AG04449 (cell line): ENCODE measurements at regions of chr20 and their contacts with region 1.

Region 1: GRCh38 chr20:35303735-35304491 is 11.7 kb upstream of the FAM83C start:
- DNase-seq: no peak
- H3K4me3 ChIP-seq: no peak overlapping the region
- CTCF ChIP-seq: peak; percentile 94

Region 2: DNA sequence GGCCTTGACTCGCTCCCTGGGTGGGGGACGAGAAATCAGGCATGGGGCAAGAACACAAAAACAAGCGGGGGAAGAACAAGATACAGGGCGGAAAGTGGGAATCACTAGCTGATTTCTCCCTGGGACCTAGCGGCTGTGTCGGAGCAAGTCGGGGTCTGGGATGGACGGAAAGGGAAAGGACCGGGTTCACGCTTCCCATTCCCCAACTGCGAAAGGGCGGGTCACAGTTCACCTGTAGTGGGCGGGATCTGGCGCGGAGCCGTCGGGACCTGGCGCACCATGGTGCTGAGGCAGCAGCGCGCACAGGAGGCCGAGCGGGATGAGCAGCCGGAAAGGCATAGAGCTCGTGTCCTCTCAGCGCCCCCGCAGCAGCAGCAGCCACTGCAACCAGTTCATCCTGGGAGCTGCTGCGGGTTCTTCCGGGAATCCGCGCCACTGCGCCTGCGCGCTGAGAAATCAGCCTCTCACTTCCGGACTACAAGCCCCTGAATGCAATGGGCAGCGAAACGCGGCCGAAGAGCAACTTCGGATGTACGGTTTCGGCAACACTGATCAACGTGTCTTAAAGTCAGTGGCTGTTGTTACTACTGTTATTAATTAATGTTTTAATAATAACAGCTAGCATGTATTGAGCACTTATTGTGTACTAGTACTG is 156.9 kb before region 1 on chr20 and contains the start of gene EDEM2:
- CTCF ChIA-PET with region 1: interaction called, 73 read pairs
- POLR2A ChIA-PET with region 1: no interaction called
- DNase-seq: peak; percentile 75
- H3K4me3 ChIP-seq: peak within 1 kb of the TSS; percentile 95
- CTCF ChIP-seq: peak; percentile 8

Region 3: DNA sequence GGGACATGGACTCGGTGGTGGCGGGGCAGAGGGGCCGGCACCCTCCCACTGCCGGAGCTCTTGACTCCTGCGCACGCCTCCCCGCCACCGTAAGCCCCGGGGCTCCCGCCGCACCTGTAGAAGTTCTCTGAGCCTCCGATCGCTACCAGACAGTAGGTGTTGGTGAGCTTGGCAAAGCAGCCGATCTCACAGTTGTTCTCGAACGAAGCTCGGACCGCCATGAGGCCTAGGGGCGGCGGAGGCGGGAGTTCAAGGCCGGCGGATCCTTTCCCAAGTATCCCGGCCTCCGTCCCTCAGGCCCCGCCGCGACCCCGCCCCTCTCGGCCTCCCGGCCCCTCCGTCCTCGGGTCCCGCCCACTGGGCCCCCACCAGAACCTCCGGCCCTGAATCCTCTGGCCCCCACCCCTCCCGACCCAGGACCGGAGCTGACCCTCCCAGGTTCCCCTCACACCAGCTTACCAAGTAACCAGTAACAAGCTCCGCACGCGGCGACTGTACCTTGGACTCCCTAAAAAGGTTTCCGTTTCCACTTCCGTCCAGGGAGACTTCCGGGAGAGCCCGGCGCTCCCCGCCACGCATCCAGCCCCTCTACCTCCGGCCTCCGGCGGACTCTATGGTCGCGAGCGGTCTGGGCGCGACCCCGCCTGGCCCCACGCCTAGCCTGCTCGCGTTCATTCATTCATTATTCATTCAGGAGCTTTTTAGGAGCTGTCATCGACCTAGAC is 19.5 kb before region 1 on chr20 and contains the start of gene EIF6:
- CTCF ChIA-PET with region 1: interaction called, 113 read pairs
- POLR2A ChIA-PET with region 1: interaction called, 6 read pairs
- DNase-seq: no peak
- H3K4me3 ChIP-seq: peak within 1 kb of the TSS; percentile 92
- CTCF ChIP-seq: no peak

Region 4: DNA sequence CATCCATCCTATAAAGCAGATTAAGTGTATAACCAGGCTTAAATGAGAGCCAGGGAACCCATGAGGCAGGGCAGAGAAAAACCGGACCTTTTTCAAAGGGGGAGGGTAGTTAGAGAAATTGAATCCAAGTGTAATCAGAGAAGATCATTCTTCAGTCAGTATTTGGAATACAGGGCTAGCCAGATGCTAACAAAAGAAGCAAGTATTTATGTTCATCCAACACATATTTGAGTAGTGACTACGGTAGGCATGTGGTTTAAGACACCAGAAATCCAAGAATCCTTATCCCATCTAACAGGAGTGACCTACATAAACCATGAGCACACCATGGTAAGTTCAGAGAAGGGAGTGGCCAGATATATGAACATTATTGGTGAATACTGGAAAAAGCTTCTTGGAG is 35.1 kb after region 1 on chr20:
- CTCF ChIA-PET with region 1: interaction called, 35 read pairs
- POLR2A ChIA-PET with region 1: interaction called, 6 read pairs
- DNase-seq: peak; percentile 93
- H3K4me3 ChIP-seq: no peak overlapping the region
- CTCF ChIP-seq: no peak

Region 5: DNA sequence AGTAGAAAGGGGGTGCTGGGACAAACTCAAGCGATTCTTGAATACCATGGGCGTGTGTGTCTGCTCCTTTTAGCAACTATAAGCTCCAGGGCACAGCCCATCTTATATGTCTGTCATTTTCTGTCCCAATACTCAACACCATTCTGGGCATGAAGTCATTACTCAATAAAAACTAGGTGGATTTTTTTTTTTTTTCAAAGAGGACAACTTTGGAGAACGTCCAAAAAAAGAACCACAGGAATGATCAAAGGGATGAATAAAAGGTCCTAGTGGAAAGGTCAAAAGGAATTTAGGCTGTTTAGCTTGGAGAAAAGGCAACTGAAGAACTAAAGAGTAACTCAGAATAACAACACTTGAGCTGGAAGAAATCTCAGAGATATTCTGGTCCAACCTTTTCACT is 83.4 kb after region 1 on chr20:
- CTCF ChIA-PET with region 1: interaction called, 14 read pairs
- POLR2A ChIA-PET with region 1: no interaction called
- DNase-seq: no peak
- H3K4me3 ChIP-seq: no peak overlapping the region
- CTCF ChIP-seq: no peak

Region 6: GRCh38 chr20:35432430-35432735 is 128.5 kb after region 1 on chr20:
- CTCF ChIA-PET with region 1: interaction called, 662 read pairs
- POLR2A ChIA-PET with region 1: interaction called, 5 read pairs
- DNase-seq: no peak
- H3K4me3 ChIP-seq: no peak overlapping the region
- CTCF ChIP-seq: no peak

Region 7: DNA sequence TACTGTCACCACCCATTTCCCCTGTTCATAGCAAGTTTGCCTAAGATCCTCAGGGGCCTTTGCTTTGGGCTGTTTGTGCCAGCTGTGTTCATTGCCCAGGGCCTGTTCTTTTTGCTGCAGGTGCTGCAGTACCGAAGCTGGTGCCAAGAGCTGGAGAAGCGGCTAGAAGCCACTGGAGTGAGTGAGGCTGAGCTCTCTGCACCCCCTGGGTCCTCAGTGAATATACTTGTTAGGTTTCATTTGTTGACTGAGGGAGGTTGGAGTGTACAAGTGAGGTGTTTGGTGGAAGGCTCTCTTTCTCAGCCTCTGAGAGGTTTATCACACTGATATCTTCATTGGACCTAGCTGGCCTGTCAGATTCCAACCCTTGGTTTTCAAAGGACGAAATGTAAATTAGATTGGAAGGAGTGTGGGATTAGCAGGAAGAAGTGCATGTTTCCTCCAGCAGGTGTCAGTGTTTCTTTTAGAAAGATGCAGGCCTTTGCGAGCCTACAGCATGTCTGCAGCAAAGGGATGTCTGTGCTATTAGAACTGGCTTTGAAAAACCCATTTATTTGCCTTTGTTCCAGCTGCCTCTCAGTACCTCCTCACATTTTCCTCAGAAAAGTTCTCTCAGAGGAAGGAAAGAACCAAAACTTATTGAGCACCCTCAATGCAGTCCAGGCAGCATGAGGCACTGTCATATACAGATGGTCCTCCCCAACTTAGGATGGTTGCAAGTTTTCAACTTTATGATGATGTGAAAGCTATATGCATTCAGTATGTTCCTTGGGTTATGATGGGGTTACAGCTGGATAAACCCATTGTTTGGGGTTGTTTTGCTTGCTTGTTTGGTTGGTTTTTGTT is 159.8 kb after region 1 on chr20:
- CTCF ChIA-PET with region 1: interaction called, 19 read pairs
- POLR2A ChIA-PET with region 1: interaction called, 3 read pairs
- DNase-seq: no peak
- H3K4me3 ChIP-seq: no peak overlapping the region
- CTCF ChIP-seq: peak; percentile 66

Region 8: DNA sequence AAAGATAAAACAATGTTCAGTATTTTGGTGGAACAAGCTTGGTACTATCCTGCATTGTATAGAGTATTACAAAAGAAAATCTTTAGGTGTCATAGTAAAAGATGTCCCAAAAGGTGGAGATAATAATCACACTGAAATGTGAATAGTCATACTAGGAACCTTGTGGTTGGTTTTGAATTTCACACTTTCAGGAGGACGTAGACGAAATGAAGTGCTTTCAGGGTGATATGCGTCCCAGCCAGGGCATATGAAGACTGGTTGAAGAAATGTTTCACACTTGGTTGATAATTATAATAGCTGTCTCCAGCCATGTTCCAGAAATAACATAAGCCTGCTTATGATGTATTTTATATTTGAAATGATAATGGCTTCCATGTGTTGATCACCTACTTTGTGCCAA is 590.0 kb after region 1 on chr20:
- CTCF ChIA-PET with region 1: no interaction called
- POLR2A ChIA-PET with region 1: no interaction called
- DNase-seq: no peak
- H3K4me3 ChIP-seq: no peak overlapping the region
- CTCF ChIP-seq: no peak